Posterior vena cava (tissue), 2 donors: ENCODE measurements at regions of chr7 and their contacts with region 1.

Region 1: GRCh38 chr7:16564909-16565426 is 38.3 kb downstream of the LRRC72 start:
- DNase-seq: no peak

Region 2: GRCh38 chr7:16078076-16078952 is 486.7 kb before region 1 on chr7:
- intact Hi-C with region 1: loop called (anchors 2 to 10 kb)
- DNase-seq: no peak

Region 3: DNA sequence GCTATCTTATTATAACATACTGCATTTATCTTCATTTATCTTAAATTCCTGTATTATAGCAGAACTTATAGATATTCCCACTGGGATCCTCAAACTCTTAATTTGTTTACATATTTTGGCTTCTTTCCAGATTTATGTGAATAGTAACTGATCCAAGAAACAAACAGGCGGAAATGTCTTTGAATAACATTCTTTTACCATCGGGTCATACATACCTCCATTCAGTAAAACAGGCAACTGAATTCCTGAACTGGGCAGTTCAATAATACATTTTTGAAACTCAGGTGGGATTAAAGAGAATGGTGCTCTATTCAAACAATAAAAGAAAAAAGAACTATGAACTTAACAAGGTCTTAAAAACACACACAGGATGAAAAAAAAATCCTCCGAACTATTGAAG is 481.0 kb before region 1 on chr7:
- intact Hi-C with region 1: loop called (anchors 2 to 10 kb)
- DNase-seq: no peak